ENCODE measurements at regions of chr11 and their contacts with region 1.

Region 1: GRCh38 chr11:3854977-3855807 is at the start of gene STIM1:
- DNase-seq: peak; percentile 97
- H3K4me3 Mint-ChIP-seq: peak within 1 kb of the TSS; percentile 92
- H3K27ac Mint-ChIP-seq: peak within 1 kb of the TSS; percentile 33
- H3K4me1 Mint-ChIP-seq: peaks cover 35% of the 10 kb centered on the region
- H3K27me3 Mint-ChIP-seq: no peaks in the 10 kb centered on the region
- CTCF ChIP-seq: peak; percentile 88
- total RNA-seq, gene STIM1: 53.7 and 60.1 TPM in 2 replicates

Region 2: GRCh38 chr11:3604167-3604566 is 251.0 kb before region 1 on chr11:
- CTCF ChIA-PET with region 1: no interaction called
- intact Hi-C with region 1: no loop called
- DNase-seq: no peak
- H3K4me3 Mint-ChIP-seq: no peak overlapping the region
- H3K27ac Mint-ChIP-seq: no peak overlapping the region
- H3K4me1 Mint-ChIP-seq: no peaks in the 10 kb centered on the region
- H3K27me3 Mint-ChIP-seq: peaks cover 42% of the 10 kb centered on the region
- CTCF ChIP-seq: no peak

Region 3: GRCh38 chr11:3841426-3842350 is 13.5 kb before region 1 on chr11:
- CTCF ChIA-PET with region 1: interaction called, 15 read pairs
- intact Hi-C with region 1: no loop called
- DNase-seq: peak; percentile 92
- H3K4me3 Mint-ChIP-seq: peak overlapping the region; percentile 94
- H3K27ac Mint-ChIP-seq: peak overlapping the region; percentile 47
- H3K4me1 Mint-ChIP-seq: peaks cover 35% of the 10 kb centered on the region
- H3K27me3 Mint-ChIP-seq: no peaks in the 10 kb centered on the region
- CTCF ChIP-seq: peak; percentile 85

Region 4: GRCh38 chr11:3865388-3866193 is 10.4 kb after region 1 on chr11:
- CTCF ChIA-PET with region 1: interaction called, 10 read pairs
- intact Hi-C with region 1: no loop called
- DNase-seq: no peak
- H3K4me3 Mint-ChIP-seq: no peak overlapping the region
- H3K27ac Mint-ChIP-seq: no peak overlapping the region
- H3K4me1 Mint-ChIP-seq: peaks cover 40% of the 10 kb centered on the region
- H3K27me3 Mint-ChIP-seq: no peaks in the 10 kb centered on the region
- CTCF ChIP-seq: no peak

Region 5: DNA sequence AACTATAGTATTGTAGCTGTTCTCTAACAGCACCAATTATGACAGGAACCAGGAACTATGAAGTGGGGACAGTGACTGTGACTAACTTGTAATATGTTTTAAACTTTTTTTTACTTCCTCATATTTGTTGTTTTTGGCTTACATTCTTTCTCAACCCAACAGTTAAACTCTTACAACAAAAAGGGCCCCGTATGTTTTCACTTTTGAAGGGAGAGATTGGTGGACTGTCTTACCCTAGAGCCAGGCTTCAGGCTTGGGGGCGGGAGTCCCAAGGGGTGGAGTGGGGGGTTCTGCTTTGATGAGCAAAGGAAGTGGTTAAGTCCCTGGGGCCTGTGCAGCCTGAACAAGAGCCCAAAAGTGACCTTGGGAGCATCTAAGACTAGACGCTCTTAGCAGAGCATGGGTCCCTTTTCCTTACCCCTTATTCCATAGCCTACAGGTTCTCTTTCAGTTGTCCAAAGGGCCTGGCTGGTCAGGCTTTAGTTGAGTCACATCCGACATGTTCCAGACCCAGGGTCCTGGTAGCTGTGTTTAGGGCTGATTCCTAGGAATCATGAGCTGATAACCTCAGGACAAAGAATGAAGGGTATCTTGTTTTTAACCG is 39.0 kb after region 1 on chr11:
- CTCF ChIA-PET with region 1: no interaction called
- intact Hi-C with region 1: no loop called
- DNase-seq: no peak
- H3K4me3 Mint-ChIP-seq: no peak overlapping the region
- H3K27ac Mint-ChIP-seq: peak overlapping the region; percentile 24
- H3K4me1 Mint-ChIP-seq: peaks cover 24% of the 10 kb centered on the region
- H3K27me3 Mint-ChIP-seq: no peaks in the 10 kb centered on the region
- CTCF ChIP-seq: no peak

Region 6: DNA sequence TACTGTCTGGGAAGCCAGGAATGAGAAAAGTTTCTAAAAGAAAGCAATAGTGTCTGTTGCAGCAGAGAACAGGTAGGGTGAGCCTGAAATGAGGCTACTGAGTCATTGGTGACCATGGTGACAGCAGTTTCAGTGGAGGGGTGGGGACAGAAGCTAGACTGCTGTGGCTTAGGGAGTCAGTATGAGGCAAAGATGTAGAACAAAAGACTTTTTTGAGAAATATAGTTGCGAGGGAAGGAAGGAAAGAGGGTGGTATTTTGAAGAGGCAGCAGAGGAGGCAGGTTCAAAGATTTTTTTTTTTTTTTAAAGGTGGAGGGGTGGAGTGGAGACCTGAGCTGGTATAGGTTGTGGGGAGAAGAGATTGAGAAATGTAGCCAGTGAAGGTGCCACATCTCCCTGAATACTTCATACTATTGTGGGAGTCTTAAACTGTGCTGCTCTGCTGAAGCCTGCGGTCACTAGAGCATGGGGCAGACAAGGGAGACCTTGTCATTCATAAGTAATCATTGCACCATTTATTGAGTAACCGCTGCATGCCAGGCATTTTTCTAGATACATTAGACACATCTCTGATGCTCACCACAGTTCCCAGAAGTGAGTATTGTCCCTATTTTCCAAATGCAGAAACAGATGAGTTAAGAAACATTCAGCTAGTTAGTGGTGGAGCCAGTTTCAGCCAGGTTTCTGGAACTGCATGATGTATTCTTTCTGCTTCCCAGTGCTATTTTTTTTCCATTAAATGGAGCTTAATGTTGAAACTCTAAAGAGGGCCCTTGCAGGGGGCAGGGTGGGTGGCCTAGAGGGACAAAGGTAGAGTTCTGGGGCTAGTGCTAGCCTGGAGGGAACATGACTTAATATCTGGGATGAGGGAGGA is 50.1 kb after region 1 on chr11:
- CTCF ChIA-PET with region 1: interaction called, 20 read pairs
- intact Hi-C with region 1: loop called (anchors 2 kb)
- DNase-seq: peak; percentile 82
- H3K4me3 Mint-ChIP-seq: peak overlapping the region; percentile 56
- H3K27ac Mint-ChIP-seq: peak overlapping the region; percentile 95
- H3K4me1 Mint-ChIP-seq: peaks cover 60% of the 10 kb centered on the region
- H3K27me3 Mint-ChIP-seq: no peaks in the 10 kb centered on the region
- CTCF ChIP-seq: no peak

Region 7: DNA sequence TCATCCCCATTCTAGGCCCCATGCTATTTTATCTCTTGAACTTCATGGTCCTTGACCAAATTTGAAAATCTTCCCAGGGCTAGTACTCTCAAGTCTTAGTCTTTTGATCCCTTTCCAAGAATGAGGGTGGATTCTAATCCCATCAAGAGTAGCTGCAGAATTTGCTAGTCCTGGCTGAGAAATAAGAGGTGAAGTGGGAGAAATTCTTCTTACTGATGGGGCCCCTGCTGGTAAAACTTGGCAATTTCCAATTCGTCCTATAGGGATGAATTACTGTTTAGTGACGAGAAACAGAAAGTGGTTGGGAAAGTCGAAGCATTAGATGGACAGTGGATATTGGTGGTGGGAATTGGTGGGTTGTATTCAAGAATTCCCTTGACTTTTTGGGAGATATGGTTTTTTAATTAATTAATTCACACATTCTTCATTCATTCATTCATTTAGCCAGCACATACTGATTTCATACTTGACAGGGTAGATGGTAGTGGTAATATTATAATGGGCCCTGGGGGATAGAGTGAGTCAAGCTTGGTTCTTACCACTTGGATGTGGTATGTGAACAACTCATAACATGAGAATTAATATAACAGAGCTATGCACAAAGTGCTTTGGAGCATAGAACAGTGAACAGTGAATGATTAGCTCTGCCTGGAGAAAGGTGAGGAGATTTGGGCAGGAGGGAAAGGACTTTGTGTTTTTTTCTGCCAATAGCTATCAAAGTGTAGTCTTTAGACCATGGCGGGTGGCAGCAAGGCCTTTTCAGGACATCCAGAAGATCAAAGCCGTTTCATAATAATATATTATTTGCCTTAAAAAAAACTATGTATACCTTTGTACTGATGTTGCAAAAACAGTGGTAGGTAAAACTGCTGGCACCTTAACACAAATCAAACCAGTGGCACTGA is 104.1 kb after region 1 on chr11:
- CTCF ChIA-PET with region 1: interaction called, 16 read pairs
- intact Hi-C with region 1: loop called (anchors 5 kb)
- DNase-seq: peak; percentile 5
- H3K4me3 Mint-ChIP-seq: no peak overlapping the region
- H3K27ac Mint-ChIP-seq: no peak overlapping the region
- H3K4me1 Mint-ChIP-seq: peaks cover 28% of the 10 kb centered on the region
- H3K27me3 Mint-ChIP-seq: no peaks in the 10 kb centered on the region
- CTCF ChIP-seq: no peak

Region 8: GRCh38 chr11:3971756-3972404 is 116.7 kb after region 1 on chr11:
- CTCF ChIA-PET with region 1: interaction called, 3 read pairs
- intact Hi-C with region 1: loop called (anchors 5 kb)
- DNase-seq: no peak
- H3K4me3 Mint-ChIP-seq: no peak overlapping the region
- H3K27ac Mint-ChIP-seq: no peak overlapping the region
- H3K4me1 Mint-ChIP-seq: no peaks in the 10 kb centered on the region
- H3K27me3 Mint-ChIP-seq: no peaks in the 10 kb centered on the region
- CTCF ChIP-seq: no peak

Region 9: DNA sequence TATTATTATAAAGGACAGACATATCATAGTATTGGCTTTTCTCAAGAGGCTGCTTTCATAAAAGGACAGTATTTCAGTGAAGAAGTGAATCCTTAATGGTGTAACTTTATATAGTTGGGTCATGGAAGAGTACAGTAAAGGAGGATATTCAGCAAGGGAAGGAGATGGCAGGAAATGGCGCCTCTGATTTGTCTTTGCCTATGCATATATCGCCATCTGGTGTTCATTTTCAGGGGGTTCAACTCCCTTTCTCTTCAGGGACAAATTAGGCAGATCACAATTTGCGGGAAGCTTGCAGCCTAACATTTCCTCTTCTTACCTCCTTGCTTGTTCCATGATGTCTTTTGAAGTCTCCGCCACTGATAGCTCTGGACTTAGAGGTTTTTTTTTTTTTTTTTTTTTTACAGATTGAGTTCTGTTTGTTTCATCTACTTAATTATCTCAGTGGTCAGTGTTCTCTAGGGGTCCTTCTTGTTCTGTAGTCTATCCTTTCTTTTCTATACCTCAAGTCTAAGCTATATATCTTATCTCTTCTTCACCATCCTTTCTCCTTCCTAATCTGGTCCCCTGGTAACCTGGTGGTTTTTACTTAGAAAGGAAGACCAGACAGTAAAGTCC is 217.6 kb after region 1 on chr11:
- CTCF ChIA-PET with region 1: interaction called, 50 read pairs
- intact Hi-C with region 1: no loop called
- DNase-seq: peak; percentile 62
- H3K4me3 Mint-ChIP-seq: no peak overlapping the region
- H3K27ac Mint-ChIP-seq: no peak overlapping the region
- H3K4me1 Mint-ChIP-seq: no peaks in the 10 kb centered on the region
- H3K27me3 Mint-ChIP-seq: no peaks in the 10 kb centered on the region
- CTCF ChIP-seq: peak; percentile 71